ENCODE measurements at regions of chr11 and their contacts with region 1.

Region 1: DNA sequence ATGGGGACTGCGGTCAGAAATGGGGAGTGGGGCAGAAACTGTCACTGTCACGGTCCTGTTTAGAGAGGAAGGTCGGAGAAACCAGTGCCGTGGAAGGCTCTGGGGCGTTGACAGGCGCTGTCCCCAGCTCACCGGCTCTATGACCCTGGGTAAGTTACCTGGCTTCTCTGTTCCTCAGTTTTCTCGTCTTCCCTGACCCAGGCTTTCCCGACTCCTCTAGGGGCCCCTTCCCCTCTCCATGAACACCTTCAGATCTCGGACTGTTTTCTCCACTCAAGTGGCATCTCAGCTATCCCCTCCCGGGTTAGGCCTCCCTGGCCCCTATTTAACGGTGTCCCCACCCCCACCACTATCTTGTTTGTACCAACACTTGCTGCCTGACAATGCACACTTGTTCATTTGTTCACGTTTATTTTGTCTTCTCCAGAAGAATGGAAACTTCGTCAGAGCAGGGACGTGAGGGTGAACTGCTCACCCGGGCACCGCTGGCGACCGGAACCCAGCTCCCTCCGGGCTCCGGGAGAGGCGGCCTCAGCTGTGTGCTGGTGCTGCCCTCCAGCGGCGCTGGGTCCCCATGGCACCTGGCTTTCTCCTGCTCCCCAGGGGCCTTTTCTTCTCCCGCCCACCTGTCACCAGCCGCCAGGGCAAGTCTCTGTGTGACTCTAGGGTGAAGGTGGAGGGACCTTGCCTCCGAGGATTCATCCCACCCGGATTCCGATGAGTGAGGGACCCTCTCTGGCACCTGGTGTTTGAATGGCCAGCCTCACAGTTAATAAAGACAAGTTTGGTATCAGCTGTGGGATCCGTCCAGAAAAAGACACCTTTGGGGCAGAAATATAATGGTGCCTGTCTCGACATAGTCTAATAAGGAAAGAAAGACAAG is 33.1 kb upstream of the SLC35C1 start:
- DNase-seq: no peak
- H3K4me3 ChIP-seq: peak overlapping the region; percentile 62
- CTCF ChIP-seq: peak; percentile 97

Region 2: GRCh38 chr11:45339729-45340519 is 431.9 kb before region 1 on chr11:
- CTCF ChIA-PET with region 1: interaction called, 95 read pairs
- POLR2A ChIA-PET with region 1: no interaction called
- DNase-seq: no peak
- H3K4me3 ChIP-seq: peak overlapping the region; percentile 38
- CTCF ChIP-seq: peak; percentile 93

Region 3: GRCh38 chr11:45655347-45655756 is 116.5 kb before region 1 on chr11:
- CTCF ChIA-PET with region 1: interaction called, 14 read pairs
- POLR2A ChIA-PET with region 1: no interaction called
- DNase-seq: no peak
- H3K4me3 ChIP-seq: no peak overlapping the region
- CTCF ChIP-seq: peak; percentile 96

Region 4: DNA sequence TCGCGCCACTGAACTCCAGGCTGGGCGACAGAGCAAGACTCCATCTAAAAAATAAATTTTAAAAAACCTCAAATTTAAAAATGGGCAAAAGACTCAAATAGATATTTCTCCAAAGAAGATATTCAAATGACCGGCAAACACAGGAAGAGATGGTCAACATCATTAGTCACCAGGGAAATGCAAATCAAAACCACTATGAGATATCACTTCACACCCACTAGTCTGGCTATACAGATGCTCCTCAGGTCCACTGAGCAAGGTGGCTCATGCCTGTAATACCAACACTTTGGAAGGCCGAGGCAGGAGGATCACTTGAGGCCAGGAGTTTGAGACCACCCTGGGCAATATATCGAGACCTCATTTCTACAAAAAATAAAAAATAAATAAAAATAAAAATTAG is 10.1 kb before region 1 on chr11:
- CTCF ChIA-PET with region 1: interaction called, 17 read pairs
- POLR2A ChIA-PET with region 1: no interaction called
- DNase-seq: no peak
- H3K4me3 ChIP-seq: no peak overlapping the region
- CTCF ChIP-seq: no peak

Region 5: GRCh38 chr11:45801723-45802315 is 30.0 kb after region 1 on chr11:
- CTCF ChIA-PET with region 1: interaction called, 46 read pairs
- POLR2A ChIA-PET with region 1: no interaction called
- DNase-seq: no peak
- H3K4me3 ChIP-seq: no peak overlapping the region
- CTCF ChIP-seq: no peak

Measured in AG04449 (cell line).